CD8-positive, alpha-beta T cell (primary cell): ENCODE measurements at regions of chr12 and their contacts with region 1.

Region 1: GRCh38 chr12:113184900-113185773 is at the starts of genes DDX54 and RITA1:
- DNase-seq: peak; percentile 76 to 93 (median 88)
- ATAC-seq: peak; percentile 79
- H3K4me3 ChIP-seq: peak within 1 kb of the TSS; percentile 89 to 95
- H3K4me3 Mint-ChIP-seq: peak within 1 kb of the TSS; percentile 96
- H3K27ac ChIP-seq: peak within 1 kb of the TSS; percentile 97 to 98
- H3K27ac Mint-ChIP-seq: peak within 1 kb of the TSS; percentile 97
- H3K4me1 ChIP-seq: peaks cover 32% of the 10 kb centered on the region
- H3K4me1 Mint-ChIP-seq: peaks cover 42% of the 10 kb centered on the region
- H3K27me3 ChIP-seq: no peaks in the 10 kb centered on the region
- H3K27me3 Mint-ChIP-seq: no peaks in the 10 kb centered on the region
- CTCF ChIP-seq: no peak
- total RNA-seq, gene DDX54: 75.4 to 85.6 TPM
- total RNA-seq, gene RITA1: 4.3 to 4.5 TPM

Region 2: DNA sequence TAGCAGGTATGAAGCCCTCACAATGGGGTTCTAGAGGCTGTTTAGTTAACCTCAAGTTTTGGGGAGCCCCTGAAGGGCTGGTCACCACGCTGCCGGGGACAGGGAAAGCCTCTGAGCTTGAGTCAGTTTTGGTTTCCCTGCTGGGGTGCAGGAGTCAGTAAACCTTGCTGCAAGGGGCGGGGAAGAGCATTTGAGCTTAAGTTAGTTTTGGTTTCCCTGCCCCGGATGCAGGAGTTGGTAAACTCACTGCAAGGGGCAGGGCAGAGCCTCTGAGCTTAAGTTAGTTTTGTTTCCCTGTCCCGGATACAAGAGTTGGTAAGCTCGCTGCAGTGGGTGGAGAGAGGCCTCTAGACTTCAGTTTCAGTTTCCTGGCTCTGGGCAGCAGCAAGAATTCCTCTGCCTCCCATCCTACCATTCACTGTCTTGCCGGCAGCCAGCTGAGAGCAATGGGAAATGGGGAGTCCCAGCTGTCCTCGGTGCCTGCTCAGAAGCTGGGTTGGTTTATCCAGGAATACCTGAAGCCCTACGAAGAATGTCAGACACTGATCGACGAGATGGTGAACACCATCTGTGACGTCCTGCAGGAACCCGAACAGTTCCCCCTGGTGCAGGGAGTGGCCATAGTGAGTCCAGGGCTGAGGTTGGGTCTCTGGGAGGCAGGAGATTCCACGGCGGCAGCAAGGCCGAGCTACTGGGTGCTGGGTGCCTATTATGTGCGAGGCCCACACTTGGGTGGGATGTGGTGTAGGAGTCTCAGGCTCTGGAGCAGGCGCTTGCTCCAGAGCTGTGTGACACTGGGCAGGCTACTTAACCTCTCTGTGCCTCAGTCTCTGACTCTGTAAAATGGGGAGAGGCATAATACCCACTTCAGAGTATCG is 206.7 kb before region 1 on chr12 and contains the start of gene OAS2:
- CTCF ChIA-PET with region 1: no interaction called
- POLR2A ChIA-PET with region 1: interaction called, 10 read pairs
- intact Hi-C with region 1: loop called (anchors 2 kb)
- DNase-seq: peak; percentile 51 to 95 (median 80)
- ATAC-seq: peak; percentile 92
- H3K4me3 ChIP-seq: peak within 1 kb of the TSS; percentile 63 to 89
- H3K4me3 Mint-ChIP-seq: peak within 1 kb of the TSS; percentile 99
- H3K27ac ChIP-seq: peak within 1 kb of the TSS; percentile 72 to 85
- H3K27ac Mint-ChIP-seq: peak within 1 kb of the TSS; percentile 99
- H3K4me1 ChIP-seq: peaks cover 33% of the 10 kb centered on the region
- H3K4me1 Mint-ChIP-seq: peaks cover 52% of the 10 kb centered on the region
- H3K27me3 ChIP-seq: no peaks in the 10 kb centered on the region
- H3K27me3 Mint-ChIP-seq: no peaks in the 10 kb centered on the region
- CTCF ChIP-seq: no peak
- total RNA-seq, gene OAS2: 9.2 to 10.7 TPM

Region 3: GRCh38 chr12:113040722-113041171 is 144.4 kb before region 1 on chr12:
- CTCF ChIA-PET with region 1: no interaction called
- POLR2A ChIA-PET with region 1: no interaction called
- intact Hi-C with region 1: no loop called
- DNase-seq: peak in 1 of 9 experiments; percentile 30
- ATAC-seq: no peak
- H3K4me3 ChIP-seq: no peak overlapping the region
- H3K4me3 Mint-ChIP-seq: no peak overlapping the region
- H3K27ac ChIP-seq: no peak overlapping the region
- H3K27ac Mint-ChIP-seq: no peak overlapping the region
- H3K4me1 ChIP-seq: no peaks in the 10 kb centered on the region
- H3K4me1 Mint-ChIP-seq: no peaks in the 10 kb centered on the region
- H3K27me3 ChIP-seq: no peaks in the 10 kb centered on the region
- H3K27me3 Mint-ChIP-seq: peaks cover 4% of the 10 kb centered on the region
- CTCF ChIP-seq: no peak

Region 4: GRCh38 chr12:113174461-113175384 is 10.4 kb before region 1 on chr12:
- CTCF ChIA-PET with region 1: interaction called, 14 read pairs
- POLR2A ChIA-PET with region 1: no interaction called
- intact Hi-C with region 1: no loop called
- DNase-seq: peak; percentile 55 to 85 (median 76)
- ATAC-seq: peak; percentile 95
- H3K4me3 ChIP-seq: no peak overlapping the region
- H3K4me3 Mint-ChIP-seq: no peak overlapping the region
- H3K27ac ChIP-seq: no peak overlapping the region
- H3K27ac Mint-ChIP-seq: no peak overlapping the region
- H3K4me1 ChIP-seq: no peaks in the 10 kb centered on the region
- H3K4me1 Mint-ChIP-seq: peaks cover 2% of the 10 kb centered on the region
- H3K27me3 ChIP-seq: no peaks in the 10 kb centered on the region
- H3K27me3 Mint-ChIP-seq: no peaks in the 10 kb centered on the region
- CTCF ChIP-seq: peak; percentile 96

Region 5: DNA sequence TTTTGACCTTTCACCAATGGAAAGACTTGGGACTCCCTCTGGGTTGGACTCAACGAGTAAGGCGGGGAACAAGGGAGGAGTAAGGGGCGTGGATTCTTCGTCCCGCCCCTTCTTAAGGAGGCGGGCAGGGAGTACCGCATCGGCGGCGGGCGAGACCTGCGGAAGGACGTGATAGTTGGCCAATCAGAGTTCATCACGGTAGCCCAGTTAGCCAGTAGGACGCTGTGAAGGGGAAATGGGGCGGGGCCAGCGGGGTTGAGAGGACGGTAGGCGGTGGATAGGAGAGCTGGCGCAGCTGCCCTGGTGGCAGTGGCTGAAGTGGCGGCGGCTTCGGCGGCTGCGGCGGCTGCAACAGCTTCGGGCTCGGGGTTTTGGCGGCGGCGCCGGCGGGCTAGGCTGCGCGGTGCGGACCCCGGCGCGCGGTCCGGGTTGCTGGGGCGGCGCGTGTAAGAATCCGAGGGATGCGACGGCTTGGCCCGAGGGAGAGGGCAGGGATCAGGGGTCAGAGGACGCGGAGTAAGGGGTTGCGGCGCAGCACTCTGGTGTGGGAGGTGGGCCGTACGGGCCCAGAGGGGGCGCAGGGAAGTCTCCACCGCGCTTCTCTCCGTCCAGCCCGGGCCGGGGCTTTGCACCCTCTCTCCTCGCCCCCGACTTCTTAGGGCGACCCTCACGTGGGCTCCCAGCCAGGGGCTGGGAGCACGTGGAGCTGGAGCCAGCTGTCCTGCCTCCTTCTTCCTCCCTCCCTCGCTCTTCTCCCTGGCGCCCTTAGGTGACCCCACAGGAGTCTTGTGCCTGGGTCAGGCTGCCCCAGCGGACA is 36.3 kb after region 1 on chr12 and contains the start of gene TPCN1:
- CTCF ChIA-PET with region 1: no interaction called
- POLR2A ChIA-PET with region 1: interaction called, 4 read pairs
- intact Hi-C with region 1: loop called (anchors 1 kb)
- DNase-seq: peak; percentile 96 to 100 (median 98)
- ATAC-seq: peak; percentile 94
- H3K4me3 ChIP-seq: peak within 1 kb of the TSS; percentile 66 to 85
- H3K4me3 Mint-ChIP-seq: peak within 1 kb of the TSS; percentile 86
- H3K27ac ChIP-seq: peak within 1 kb of the TSS; percentile 62 to 63
- H3K27ac Mint-ChIP-seq: peak within 1 kb of the TSS; percentile 83
- H3K4me1 ChIP-seq: peaks cover 27% of the 10 kb centered on the region
- H3K4me1 Mint-ChIP-seq: peaks cover 45% of the 10 kb centered on the region
- H3K27me3 ChIP-seq: no peaks in the 10 kb centered on the region
- H3K27me3 Mint-ChIP-seq: no peaks in the 10 kb centered on the region
- CTCF ChIP-seq: no peak
- total RNA-seq, gene TPCN1: 32.8 to 37.0 TPM

Region 6: GRCh38 chr12:113334786-113335540 is 149.8 kb after region 1 on chr12 and contains the start of gene SLC8B1:
- CTCF ChIA-PET with region 1: no interaction called
- POLR2A ChIA-PET with region 1: interaction called, 3 read pairs
- intact Hi-C with region 1: loop called (anchors 1 to 2 kb)
- DNase-seq: peak; percentile 74 to 95 (median 86)
- ATAC-seq: peak; percentile 99
- H3K4me3 ChIP-seq: peak within 1 kb of the TSS; percentile 80 to 89
- H3K4me3 Mint-ChIP-seq: peak within 1 kb of the TSS; percentile 92
- H3K27ac ChIP-seq: peak within 1 kb of the TSS; percentile 31 to 51
- H3K27ac Mint-ChIP-seq: peak within 1 kb of the TSS; percentile 88
- H3K4me1 ChIP-seq: peaks cover 17% of the 10 kb centered on the region
- H3K4me1 Mint-ChIP-seq: peaks cover 41% of the 10 kb centered on the region
- H3K27me3 ChIP-seq: no peaks in the 10 kb centered on the region
- H3K27me3 Mint-ChIP-seq: no peaks in the 10 kb centered on the region
- CTCF ChIP-seq: no peak
- total RNA-seq, gene SLC8B1: 67.3 to 72.8 TPM